Activated B cell treated with CpG ODN at 0.5 μM for 24 hours (primary cell): ENCODE measurements at regions of chr21 and their contacts with region 1.

Region 1: DNA sequence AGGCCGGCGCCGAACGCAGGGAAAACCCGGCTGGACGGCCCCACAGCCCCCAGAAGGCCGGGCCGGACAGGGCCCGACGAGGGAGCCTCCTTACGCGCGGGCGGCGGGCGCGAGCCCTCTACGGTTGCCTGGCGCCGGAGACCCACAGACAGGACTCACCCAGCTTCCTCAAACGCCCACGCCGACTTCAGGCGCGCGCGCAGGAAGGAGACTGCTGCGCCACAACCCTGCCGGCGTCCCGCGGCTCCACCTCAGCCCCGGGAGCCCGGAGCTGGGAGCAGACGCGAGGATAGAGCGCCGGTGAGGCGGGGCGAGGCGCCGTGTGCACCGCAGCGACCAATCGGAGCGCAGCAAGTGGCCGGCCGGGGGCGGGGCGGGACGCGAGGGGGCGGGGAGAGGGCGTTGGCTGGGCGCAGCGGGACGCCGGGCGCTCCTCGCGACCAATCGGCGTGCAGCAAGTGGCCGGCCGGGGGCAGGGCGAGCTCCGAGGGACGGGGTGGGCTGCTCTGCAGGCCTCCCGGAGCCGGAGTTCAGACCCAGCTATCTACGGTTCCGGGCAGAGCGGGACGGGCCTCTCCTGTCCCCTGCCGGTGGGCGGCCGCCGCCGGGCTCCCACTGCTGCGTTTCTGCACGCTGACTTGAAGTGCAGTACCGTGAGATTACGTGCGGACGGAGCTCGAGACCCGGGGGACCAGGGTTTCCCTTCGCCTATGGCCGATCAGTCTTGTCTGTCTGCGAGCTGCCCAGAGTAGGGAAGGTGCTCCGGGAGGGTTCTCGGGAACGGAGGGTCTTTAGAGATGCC is at the start of gene TMEM50B:
- DNase-seq: peak; percentile 88
- ATAC-seq: peak; percentile 88
- H3K4me3 Mint-ChIP-seq: peak within 1 kb of the TSS; percentile 92
- H3K27ac Mint-ChIP-seq: peak within 1 kb of the TSS; percentile 90
- H3K4me1 Mint-ChIP-seq: peaks cover 20% of the 10 kb centered on the region
- H3K27me3 Mint-ChIP-seq: no peaks in the 10 kb centered on the region
- CTCF ChIP-seq: no peak
- total RNA-seq, gene TMEM50B: 42.3 and 47.2 TPM in 2 replicates

Region 2: DNA sequence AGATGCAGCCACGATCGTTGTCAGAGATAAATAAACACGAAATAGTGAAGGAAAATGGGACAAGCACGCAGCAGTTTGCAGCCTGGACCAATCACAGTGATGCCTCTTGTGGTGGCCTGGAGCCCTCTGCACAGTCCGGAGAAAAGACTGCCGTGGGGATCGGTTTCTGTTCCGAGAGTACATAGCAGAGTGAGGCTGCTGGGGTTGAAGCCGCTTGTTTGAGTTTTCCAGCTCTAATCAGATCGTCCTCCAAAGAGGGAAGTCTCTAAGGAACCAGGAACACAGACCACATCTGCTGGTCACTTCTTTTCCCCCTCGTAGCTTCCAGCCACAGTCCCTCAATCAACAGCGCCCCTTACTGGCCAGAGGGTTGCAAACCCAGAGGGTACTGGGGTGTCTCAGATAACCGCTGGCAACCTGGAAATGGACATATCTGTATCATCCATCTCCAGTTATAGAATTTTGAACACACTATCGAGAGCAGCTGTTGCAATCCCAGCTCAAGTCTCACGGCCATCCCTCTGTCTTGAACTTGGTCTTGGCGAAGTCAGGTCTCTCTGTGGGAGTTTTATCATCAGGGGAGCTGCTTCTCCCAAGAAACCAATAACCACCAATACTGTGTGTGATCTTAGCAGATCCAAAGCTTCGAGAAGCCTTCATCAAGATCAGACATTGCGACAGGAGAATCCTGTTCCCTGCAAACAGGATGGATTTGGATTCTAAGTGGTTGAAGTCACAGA is 352.6 kb before region 1 on chr21:
- CTCF ChIA-PET with region 1: no interaction called
- POLR2A ChIA-PET with region 1: no interaction called
- intact Hi-C with region 1: no loop called
- DNase-seq: no peak
- ATAC-seq: no peak
- H3K4me3 Mint-ChIP-seq: peak overlapping the region; percentile 42
- H3K27ac Mint-ChIP-seq: no peak overlapping the region
- H3K4me1 Mint-ChIP-seq: peaks cover 6% of the 10 kb centered on the region
- H3K27me3 Mint-ChIP-seq: peaks cover 38% of the 10 kb centered on the region
- CTCF ChIP-seq: no peak

Region 3: GRCh38 chr21:33588485-33589335 is 108.8 kb after region 1 on chr21 and contains the start of gene DONSON:
- CTCF ChIA-PET with region 1: no interaction called
- POLR2A ChIA-PET with region 1: interaction called, 11 read pairs
- intact Hi-C with region 1: loop called (anchors 2 kb)
- DNase-seq: peak; percentile 94
- ATAC-seq: peak; percentile 95
- H3K4me3 Mint-ChIP-seq: peak within 1 kb of the TSS; percentile 90
- H3K27ac Mint-ChIP-seq: peak within 1 kb of the TSS; percentile 56
- H3K4me1 Mint-ChIP-seq: peaks cover 10% of the 10 kb centered on the region
- H3K27me3 Mint-ChIP-seq: no peaks in the 10 kb centered on the region
- CTCF ChIP-seq: no peak
- total RNA-seq, gene DONSON: 4.4 and 4.7 TPM in 2 replicates